CD14-positive monocyte (primary cell): ENCODE measurements at regions of chr1 and their contacts with region 1.

Region 1: DNA sequence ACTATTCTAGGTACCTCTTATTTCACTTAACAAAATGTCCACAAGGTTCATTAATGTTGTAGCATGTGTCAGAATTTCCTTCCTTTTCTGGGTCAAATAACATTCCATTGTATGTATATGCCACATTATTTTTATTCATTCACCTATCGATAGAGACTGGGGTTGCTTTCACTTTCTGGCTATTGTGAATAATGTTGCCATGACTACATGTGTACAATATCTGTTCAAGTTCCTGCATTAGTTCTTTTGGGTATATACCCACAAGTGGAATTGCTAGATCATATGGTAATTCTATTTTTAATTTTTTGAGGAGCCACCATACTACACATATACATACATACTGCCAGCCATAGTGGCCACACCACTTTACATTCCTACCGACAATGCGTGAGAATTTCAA is 158.4 kb downstream of the ZZZ3 start:
- DNase-seq: no peak
- H3K4me3 ChIP-seq: no peak overlapping the region
- H3K4me3 Mint-ChIP-seq: no peak overlapping the region
- H3K27ac ChIP-seq: no peak overlapping the region
- H3K27ac Mint-ChIP-seq: no peak overlapping the region
- H3K4me1 ChIP-seq: peaks cover 0 to 5% of the 10 kb centered on the region in 2 donors
- H3K4me1 Mint-ChIP-seq: peaks cover 6% of the 10 kb centered on the region
- H3K27me3 ChIP-seq: no peaks in the 10 kb centered on the region
- H3K27me3 Mint-ChIP-seq: peaks cover 0 to 2% (median 0%) of the 10 kb centered on the region in 3 donors
- CTCF ChIP-seq: no peak

Region 2: GRCh38 chr1:77267035-77267434 is 257.0 kb before region 1 on chr1:
- intact Hi-C with region 1: no loop called
- DNase-seq: no peak
- H3K4me3 ChIP-seq: no peak overlapping the region
- H3K4me3 Mint-ChIP-seq: no peak overlapping the region
- H3K27ac ChIP-seq: no peak overlapping the region
- H3K27ac Mint-ChIP-seq: no peak overlapping the region
- H3K4me1 ChIP-seq: peaks cover 5 to 6% of the 10 kb centered on the region in 2 donors
- H3K4me1 Mint-ChIP-seq: peaks cover 6% of the 10 kb centered on the region
- H3K27me3 ChIP-seq: peaks cover 0 to 3% of the 10 kb centered on the region in 2 donors
- H3K27me3 Mint-ChIP-seq: peaks cover 2 to 13% (median 9%) of the 10 kb centered on the region in 3 donors
- CTCF ChIP-seq: no peak

Region 3: GRCh38 chr1:77504986-77505385 is 19.1 kb before region 1 on chr1:
- intact Hi-C with region 1: loop called in 1 of 2 experiments (anchors 2 kb)
- DNase-seq: peak; percentile 35 to 37 (median 36)
- H3K4me3 ChIP-seq: peak overlapping the region in 1 of 3 experiments; percentile 12
- H3K4me3 Mint-ChIP-seq: no peak overlapping the region
- H3K27ac ChIP-seq: no peak overlapping the region
- H3K27ac Mint-ChIP-seq: peak overlapping the region in 1 of 7 donors; percentile 49
- H3K4me1 ChIP-seq: peaks cover 16% of the 10 kb centered on the region in 2 donors
- H3K4me1 Mint-ChIP-seq: peaks cover 32% of the 10 kb centered on the region
- H3K27me3 ChIP-seq: no peaks in the 10 kb centered on the region
- H3K27me3 Mint-ChIP-seq: peaks cover 0 to 2% (median 0%) of the 10 kb centered on the region in 3 donors
- CTCF ChIP-seq: no peak